ENCODE measurements at regions of chr3 and their contacts with region 1.

Region 1: GRCh38 chr3:115783938-115784738 is 160.8 kb downstream of the GAP43 start:
- DNase-seq: peak; percentile 89
- H3K4me3 ChIP-seq: peak overlapping the region; percentile 44 to 67 (median 56)
- H3K27ac ChIP-seq: peak overlapping the region; percentile 85
- H3K4me1 ChIP-seq: peaks cover 5% of the 10 kb centered on the region
- H3K27me3 ChIP-seq: peaks cover 4 to 6% of the 10 kb centered on the region in 2 experiments
- CTCF ChIP-seq: peak; percentile 98 to 99
- POLR2A ChIP-seq: no peak

Region 2: DNA sequence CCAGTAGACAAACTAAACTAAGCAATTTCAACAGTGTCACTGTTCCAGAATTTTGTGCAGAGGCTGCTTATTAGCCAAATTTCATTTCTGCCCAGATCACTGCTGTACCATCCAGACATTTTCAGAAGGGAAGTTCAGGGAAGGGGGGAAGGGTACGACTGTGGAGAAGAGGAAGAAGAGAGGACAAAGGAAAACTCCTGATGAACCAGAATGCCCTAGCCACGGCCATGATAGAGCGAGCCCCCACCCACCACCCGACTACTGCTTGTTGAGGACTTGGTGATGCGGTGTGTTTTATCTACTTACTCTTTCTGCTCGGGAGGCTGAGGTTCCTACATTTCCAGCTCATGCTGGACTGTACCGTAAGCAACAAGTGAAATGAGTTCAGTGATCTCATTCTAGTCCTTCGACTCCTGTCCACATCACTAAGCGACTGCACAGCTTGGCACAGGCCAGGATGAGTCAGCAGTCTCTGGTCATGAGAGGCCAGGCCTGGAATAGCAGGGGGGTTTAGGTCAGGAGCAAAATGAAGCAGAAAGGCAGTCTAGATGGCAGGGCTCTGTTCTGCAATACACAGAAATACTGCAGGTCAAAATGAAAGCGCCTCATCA is 1159.5 kb before region 1 on chr3:
- CTCF ChIA-PET with region 1: no interaction called
- POLR2A ChIA-PET with region 1: no interaction called
- dilution Hi-C with region 1: no loop called
- intact Hi-C with region 1: loop called (anchors 10 kb)
- DNase-seq: peak; percentile 97
- H3K4me3 ChIP-seq: peak overlapping the region; percentile 21 to 88 (median 50)
- H3K27ac ChIP-seq: peak overlapping the region; percentile 99
- H3K4me1 ChIP-seq: peaks cover 36% of the 10 kb centered on the region
- H3K27me3 ChIP-seq: no peaks in the 10 kb centered on the region
- CTCF ChIP-seq: no peak
- POLR2A ChIP-seq: no peak

Region 3: DNA sequence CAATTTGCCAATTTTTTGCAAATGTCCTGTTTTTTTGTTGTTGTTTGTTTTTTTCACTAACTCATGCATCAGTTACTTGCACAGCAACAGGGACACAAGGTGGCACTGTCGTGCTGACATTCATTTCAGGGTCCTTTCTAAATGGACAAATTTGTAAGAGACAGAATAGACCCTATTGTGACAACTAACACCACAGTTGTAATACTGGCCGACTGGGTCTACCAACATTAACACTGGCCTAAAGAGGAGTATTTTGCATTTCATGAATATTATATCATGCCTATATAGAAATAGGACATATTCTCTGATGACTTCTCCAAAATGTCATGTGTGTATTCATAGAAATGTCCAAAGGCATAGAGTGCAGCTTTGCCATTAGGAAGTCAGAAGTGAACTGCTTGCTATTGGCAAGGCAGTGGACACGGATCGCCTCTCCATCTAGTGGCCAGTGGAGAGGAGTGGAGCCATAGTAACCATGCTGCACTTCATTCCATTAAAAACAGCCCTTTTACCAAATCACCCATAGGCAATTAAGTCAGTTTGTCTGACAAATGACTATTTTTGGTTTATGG is 691.8 kb before region 1 on chr3:
- CTCF ChIA-PET with region 1: interaction called, 4 read pairs
- POLR2A ChIA-PET with region 1: no interaction called
- dilution Hi-C with region 1: no loop called
- intact Hi-C with region 1: loop called (anchors 1 kb)
- DNase-seq: peak; percentile 70
- H3K4me3 ChIP-seq: no peak overlapping the region
- H3K27ac ChIP-seq: no peak overlapping the region
- H3K4me1 ChIP-seq: no peaks in the 10 kb centered on the region
- H3K27me3 ChIP-seq: no peaks in the 10 kb centered on the region
- CTCF ChIP-seq: peak; percentile 29 to 77
- POLR2A ChIP-seq: no peak

Region 4: GRCh38 chr3:115239717-115240116 is 544.4 kb before region 1 on chr3:
- CTCF ChIA-PET with region 1: no interaction called
- POLR2A ChIA-PET with region 1: no interaction called
- dilution Hi-C with region 1: no loop called
- intact Hi-C with region 1: loop called (anchors 1 kb)
- DNase-seq: peak; percentile 99
- H3K4me3 ChIP-seq: no peak overlapping the region
- H3K27ac ChIP-seq: peak overlapping the region; percentile 70
- H3K4me1 ChIP-seq: peaks cover 20% of the 10 kb centered on the region
- H3K27me3 ChIP-seq: no peaks in the 10 kb centered on the region
- CTCF ChIP-seq: no peak
- POLR2A ChIP-seq: no peak

Region 5: DNA sequence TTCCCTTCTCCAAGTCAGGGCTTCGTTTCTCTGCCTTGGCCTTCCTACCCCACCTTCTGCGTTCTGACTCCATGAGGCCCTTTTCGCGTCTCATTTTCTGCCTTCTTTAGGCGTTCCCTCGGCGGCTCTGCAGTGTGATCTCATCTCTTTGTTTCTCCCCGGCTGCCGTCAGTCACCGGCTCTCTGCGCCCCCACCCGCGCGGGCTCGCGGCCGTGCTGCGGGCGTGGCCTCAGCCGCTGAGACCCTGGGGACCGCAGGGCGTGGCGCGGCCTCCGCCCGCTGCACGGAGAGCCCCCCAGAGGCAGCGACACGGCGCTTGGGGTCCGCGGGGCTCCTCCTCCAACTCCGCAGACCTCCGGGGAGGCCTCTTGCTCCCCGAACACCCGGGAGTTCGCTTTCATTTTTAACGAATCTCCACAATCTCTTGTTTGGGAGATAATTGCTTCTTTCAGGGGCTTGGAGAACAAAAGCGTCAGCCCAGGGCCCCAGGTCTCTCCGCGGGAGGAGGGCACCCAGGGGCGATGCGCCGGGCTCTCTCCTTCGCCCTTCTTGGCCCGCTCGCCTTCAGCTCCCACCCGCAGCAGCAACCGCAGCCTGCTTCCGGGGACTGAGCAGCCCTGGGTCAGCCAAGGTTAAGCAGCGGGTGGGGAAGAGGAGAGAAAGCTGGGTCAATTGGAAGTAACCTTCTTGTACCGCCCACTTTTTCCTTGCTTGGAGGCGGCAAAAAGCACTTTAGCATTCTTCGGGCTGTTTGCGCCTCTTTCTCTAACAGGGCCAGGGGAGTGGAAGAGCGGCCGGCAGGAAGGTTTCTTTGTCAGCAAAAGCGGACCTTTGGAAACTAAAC is 125.6 kb before region 1 on chr3:
- CTCF ChIA-PET with region 1: interaction called, 4 read pairs
- POLR2A ChIA-PET with region 1: no interaction called
- dilution Hi-C with region 1: no loop called
- intact Hi-C with region 1: loop called (anchors 1 kb)
- DNase-seq: peak; percentile 82
- H3K4me3 ChIP-seq: peak overlapping the region; percentile 74 to 91 (median 82)
- H3K27ac ChIP-seq: peak overlapping the region; percentile 80
- H3K4me1 ChIP-seq: peaks cover 12% of the 10 kb centered on the region
- H3K27me3 ChIP-seq: peaks cover 7 to 8% of the 10 kb centered on the region in 2 experiments
- CTCF ChIP-seq: no peak
- POLR2A ChIP-seq: peak; percentile 51

Region 6: DNA sequence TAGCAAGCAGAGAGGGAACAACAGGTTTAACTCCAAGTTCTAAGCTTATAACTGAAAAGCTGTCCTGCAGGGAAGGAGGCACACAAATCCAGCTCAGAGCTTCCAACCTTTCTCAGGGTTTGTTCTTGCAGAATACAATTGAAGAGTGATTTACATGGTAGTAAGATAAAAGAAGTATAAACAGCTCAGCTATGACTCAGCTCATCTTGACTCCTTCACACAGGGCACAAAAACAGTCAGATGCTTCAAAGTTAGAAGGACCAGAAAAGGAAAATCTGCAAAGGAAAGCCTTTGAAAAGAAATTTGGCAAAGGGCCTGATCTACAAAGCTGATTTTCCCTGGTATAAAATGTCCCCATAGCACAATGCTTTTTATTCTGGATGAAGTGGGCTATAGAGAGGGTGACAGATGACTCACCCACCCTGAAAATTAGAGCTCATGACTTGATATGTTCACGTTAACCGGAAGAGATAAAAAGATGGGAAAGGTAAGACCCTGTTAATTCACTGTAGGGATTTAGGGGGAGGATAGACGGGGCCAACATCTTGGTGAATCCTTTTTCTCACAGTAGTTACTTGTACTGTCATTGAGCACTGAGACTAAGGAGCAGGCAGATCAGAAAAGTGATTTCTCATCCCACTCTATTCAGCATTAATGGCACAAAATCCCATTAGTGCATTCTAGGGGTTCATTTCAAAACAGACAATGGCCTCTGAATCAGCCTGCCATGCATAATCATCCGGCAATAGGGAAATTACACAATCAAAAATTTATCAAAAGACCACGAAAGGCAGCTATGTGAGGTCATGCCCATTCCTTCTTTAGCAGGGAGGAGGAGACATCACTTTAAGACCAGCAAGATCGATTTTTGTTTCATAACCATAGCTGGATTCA is 17.3 kb before region 1 on chr3:
- CTCF ChIA-PET with region 1: interaction called, 14 read pairs
- POLR2A ChIA-PET with region 1: no interaction called
- dilution Hi-C with region 1: no loop called
- intact Hi-C with region 1: no loop called
- DNase-seq: no peak
- H3K4me3 ChIP-seq: no peak overlapping the region
- H3K27ac ChIP-seq: no peak overlapping the region
- H3K4me1 ChIP-seq: peaks cover 2% of the 10 kb centered on the region
- H3K27me3 ChIP-seq: peaks cover 0 to 7% of the 10 kb centered on the region in 2 experiments
- CTCF ChIP-seq: no peak
- POLR2A ChIP-seq: no peak

Measured in endothelial cell of umbilical vein (primary cell).